CD8-positive, alpha-beta T cell (primary cell): ENCODE measurements at regions of chr18 and their contacts with region 1.

Region 1: GRCh38 chr18:32158108-32158624 is 31.7 kb upstream of the MEP1B start:
- DNase-seq: peak; percentile 46 to 86 (median 69)
- ATAC-seq: peak; percentile 93
- H3K4me3 ChIP-seq: peak overlapping the region; percentile 30 to 34
- H3K4me3 Mint-ChIP-seq: peak overlapping the region; percentile 75
- H3K27ac ChIP-seq: no peak overlapping the region
- H3K27ac Mint-ChIP-seq: no peak overlapping the region
- H3K4me1 ChIP-seq: no peaks in the 10 kb centered on the region
- H3K4me1 Mint-ChIP-seq: peaks cover 6% of the 10 kb centered on the region
- H3K27me3 ChIP-seq: peaks cover 0 to 4% of the 10 kb centered on the region in 2 experiments
- H3K27me3 Mint-ChIP-seq: peaks cover 4% of the 10 kb centered on the region
- CTCF ChIP-seq: peak; percentile 81

Region 2: DNA sequence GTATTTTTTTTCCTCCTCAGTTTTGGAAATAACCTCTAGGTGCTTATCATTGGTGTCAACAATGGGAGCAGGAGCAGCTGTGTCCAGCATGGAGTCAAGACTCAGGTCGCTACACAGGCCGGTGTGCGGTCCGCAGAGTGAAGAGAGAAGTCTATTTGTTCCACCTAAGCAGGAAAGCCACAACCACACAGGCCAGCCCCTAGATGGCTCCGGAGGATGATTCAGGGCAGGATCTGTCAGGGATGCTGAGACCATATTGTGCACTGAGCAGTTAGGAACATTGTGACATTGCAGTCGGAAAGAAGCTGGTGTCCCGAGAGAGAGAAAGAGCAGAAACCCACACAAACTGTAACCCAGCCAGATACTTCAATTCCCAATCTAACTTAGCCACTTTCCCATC is 175.6 kb after region 1 on chr18:
- CTCF ChIA-PET with region 1: no interaction called
- POLR2A ChIA-PET with region 1: no interaction called
- intact Hi-C with region 1: loop called in 1 of 2 experiments (anchors 10 kb)
- DNase-seq: no peak
- ATAC-seq: no peak
- H3K4me3 ChIP-seq: no peak overlapping the region
- H3K4me3 Mint-ChIP-seq: no peak overlapping the region
- H3K27ac ChIP-seq: no peak overlapping the region
- H3K27ac Mint-ChIP-seq: no peak overlapping the region
- H3K4me1 ChIP-seq: no peaks in the 10 kb centered on the region
- H3K4me1 Mint-ChIP-seq: no peaks in the 10 kb centered on the region
- H3K27me3 ChIP-seq: no peaks in the 10 kb centered on the region
- H3K27me3 Mint-ChIP-seq: peaks cover 4% of the 10 kb centered on the region
- CTCF ChIP-seq: no peak

Region 3: DNA sequence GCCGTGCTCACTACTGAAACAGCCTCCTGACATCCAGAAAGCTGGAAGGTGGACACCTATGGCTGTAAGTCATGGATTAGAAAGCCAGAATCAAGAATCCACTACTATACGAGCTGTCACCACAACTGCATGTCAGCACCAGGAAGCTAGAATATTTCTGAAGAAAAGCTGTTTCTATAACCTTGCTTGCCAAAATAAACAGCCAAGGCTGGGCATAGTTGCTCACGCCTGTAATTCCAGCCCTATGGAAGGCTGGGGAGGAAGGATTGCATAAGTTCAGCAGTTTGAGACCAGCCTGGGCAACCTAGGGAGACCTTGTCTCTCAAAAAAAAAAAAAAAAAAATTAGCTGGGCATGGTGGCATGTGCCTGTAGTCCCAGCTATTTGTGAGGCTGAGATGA is 408.8 kb after region 1 on chr18:
- CTCF ChIA-PET with region 1: interaction called, 18 read pairs
- POLR2A ChIA-PET with region 1: no interaction called
- intact Hi-C with region 1: no loop called
- DNase-seq: no peak
- ATAC-seq: no peak
- H3K4me3 ChIP-seq: no peak overlapping the region
- H3K4me3 Mint-ChIP-seq: no peak overlapping the region
- H3K27ac ChIP-seq: no peak overlapping the region
- H3K27ac Mint-ChIP-seq: no peak overlapping the region
- H3K4me1 ChIP-seq: no peaks in the 10 kb centered on the region
- H3K4me1 Mint-ChIP-seq: no peaks in the 10 kb centered on the region
- H3K27me3 ChIP-seq: no peaks in the 10 kb centered on the region
- H3K27me3 Mint-ChIP-seq: peaks cover 3% of the 10 kb centered on the region
- CTCF ChIP-seq: no peak